Heart right ventricle (tissue), 16 donors: ENCODE measurements at regions of chr1 and their contacts with region 1.

Region 1: GRCh38 chr1:51235673-51236530 is at the start of gene RNF11:
- DNase-seq: peak; percentile 92 to 94
- ATAC-seq: peak; percentile 97 to 99 (median 98)
- H3K4me3 ChIP-seq: peak within 1 kb of the TSS; percentile 62 to 99 (median 92)
- H3K27ac ChIP-seq: peak within 1 kb of the TSS; percentile 79 to 98 (median 97)
- H3K4me1 ChIP-seq: peaks cover 0 to 52% (median 37%) of the 10 kb centered on the region in 9 donors
- H3K27me3 ChIP-seq: no peaks in the 10 kb centered on the region
- CTCF ChIP-seq: no peak
- total RNA-seq, gene RNF11: 107 to 157 (median 115) TPM

Region 2: DNA sequence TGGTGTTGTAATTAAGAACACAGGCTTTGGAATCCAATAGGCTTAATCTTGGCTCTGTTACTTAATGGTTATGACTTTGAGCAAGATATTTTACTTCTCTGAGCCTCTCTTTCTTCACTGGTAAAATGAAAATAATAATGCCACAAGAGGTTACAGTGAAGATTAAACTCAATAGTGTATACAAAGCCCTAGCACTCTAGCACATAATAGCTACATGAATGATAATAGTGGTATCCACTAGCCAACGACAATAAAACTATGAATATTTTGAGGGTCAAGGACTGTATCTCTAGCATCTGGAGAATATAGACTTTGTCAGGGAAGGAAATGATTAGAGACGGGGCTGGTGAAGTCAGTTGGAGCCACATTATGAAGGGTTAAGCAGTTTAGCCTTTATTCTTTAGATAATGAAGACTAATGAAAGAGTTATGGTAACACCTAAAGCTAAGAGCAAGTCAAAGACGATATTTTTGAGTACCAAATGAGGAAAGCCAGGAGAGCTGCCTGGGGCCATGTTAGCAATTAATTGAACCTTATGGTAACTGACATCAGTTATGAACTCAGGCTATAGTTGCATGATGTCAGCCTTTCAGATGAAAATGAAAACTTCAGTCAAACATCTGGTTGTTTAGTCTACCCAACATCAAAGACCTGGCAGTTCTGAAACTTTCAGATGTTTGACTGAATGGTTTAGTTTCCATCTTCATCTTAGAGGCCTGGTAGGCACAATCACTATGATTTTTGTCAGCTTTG is 32.6 kb before region 1 on chr1:
- intact Hi-C with region 1: no loop called
- DNase-seq: no peak
- ATAC-seq: no peak
- H3K4me3 ChIP-seq: no peak overlapping the region
- H3K27ac ChIP-seq: no peak overlapping the region
- H3K4me1 ChIP-seq: no peaks in the 10 kb centered on the region
- H3K27me3 ChIP-seq: no peaks in the 10 kb centered on the region
- CTCF ChIP-seq: no peak

Region 3: GRCh38 chr1:51284487-51284954 is 48.6 kb after region 1 on chr1:
- intact Hi-C with region 1: loop called in 1 of 10 experiments (anchors 1 kb)
- DNase-seq: peak in 1 of 2 donors; percentile 45
- ATAC-seq: peak; percentile 25 to 85 (median 70)
- H3K4me3 ChIP-seq: no peak overlapping the region
- H3K27ac ChIP-seq: no peak overlapping the region
- H3K4me1 ChIP-seq: peaks cover 0 to 34% (median 14%) of the 10 kb centered on the region in 9 donors
- H3K27me3 ChIP-seq: no peaks in the 10 kb centered on the region
- CTCF ChIP-seq: no peak

Region 4: GRCh38 chr1:51296383-51297357 is 60.8 kb after region 1 on chr1:
- intact Hi-C with region 1: loop called in 4 of 10 experiments (anchors 5 to 10 kb)
- DNase-seq: peak; percentile 82 to 86
- ATAC-seq: peak; percentile 76 to 90 (median 86)
- H3K4me3 ChIP-seq: peak overlapping the region in 9 of 10 donors; percentile 39 to 61 (median 52)
- H3K27ac ChIP-seq: peak overlapping the region in 5 of 10 donors; percentile 10 to 64 (median 25)
- H3K4me1 ChIP-seq: peaks cover 3 to 18% (median 12%) of the 10 kb centered on the region in 9 donors
- H3K27me3 ChIP-seq: no peaks in the 10 kb centered on the region
- CTCF ChIP-seq: peak; percentile 90 to 99 (median 97)